Activated CD8-positive, alpha-beta memory T cell treated with anti-CD3 and anti-CD28 coated beads, Interleukin-2, amount 10 ng/mL, durations not matched to agents 7 days and 5 days (primary cell): ENCODE measurements at regions of chr11 and their contacts with region 1.

Region 1: DNA sequence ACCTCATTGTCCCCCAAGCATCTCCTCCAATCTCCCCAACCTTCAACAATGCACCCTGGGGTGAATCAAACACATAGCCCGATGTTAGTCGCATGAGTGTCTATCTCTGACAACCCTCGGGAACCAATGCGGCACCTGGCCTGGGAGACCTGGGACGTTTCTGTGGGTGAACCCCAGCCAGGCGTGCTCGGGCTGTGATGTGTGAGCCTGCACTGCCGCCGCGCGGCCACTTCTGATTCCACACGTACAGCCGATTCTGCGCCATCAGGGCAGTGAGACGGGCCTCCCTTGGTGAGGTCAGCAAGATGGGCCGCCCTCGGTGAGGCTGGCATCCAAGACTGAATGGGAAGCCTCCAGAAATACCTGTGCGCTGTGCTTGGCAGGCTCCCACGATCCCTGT is 5.2 kb upstream of the H19 start:
- DNase-seq: no peak
- ATAC-seq: peak; percentile 74
- H3K4me3 Mint-ChIP-seq: no peak overlapping the region
- H3K27ac Mint-ChIP-seq: no peak overlapping the region
- H3K4me1 Mint-ChIP-seq: no peaks in the 10 kb centered on the region
- H3K27me3 Mint-ChIP-seq: no peaks in the 10 kb centered on the region

Region 2: DNA sequence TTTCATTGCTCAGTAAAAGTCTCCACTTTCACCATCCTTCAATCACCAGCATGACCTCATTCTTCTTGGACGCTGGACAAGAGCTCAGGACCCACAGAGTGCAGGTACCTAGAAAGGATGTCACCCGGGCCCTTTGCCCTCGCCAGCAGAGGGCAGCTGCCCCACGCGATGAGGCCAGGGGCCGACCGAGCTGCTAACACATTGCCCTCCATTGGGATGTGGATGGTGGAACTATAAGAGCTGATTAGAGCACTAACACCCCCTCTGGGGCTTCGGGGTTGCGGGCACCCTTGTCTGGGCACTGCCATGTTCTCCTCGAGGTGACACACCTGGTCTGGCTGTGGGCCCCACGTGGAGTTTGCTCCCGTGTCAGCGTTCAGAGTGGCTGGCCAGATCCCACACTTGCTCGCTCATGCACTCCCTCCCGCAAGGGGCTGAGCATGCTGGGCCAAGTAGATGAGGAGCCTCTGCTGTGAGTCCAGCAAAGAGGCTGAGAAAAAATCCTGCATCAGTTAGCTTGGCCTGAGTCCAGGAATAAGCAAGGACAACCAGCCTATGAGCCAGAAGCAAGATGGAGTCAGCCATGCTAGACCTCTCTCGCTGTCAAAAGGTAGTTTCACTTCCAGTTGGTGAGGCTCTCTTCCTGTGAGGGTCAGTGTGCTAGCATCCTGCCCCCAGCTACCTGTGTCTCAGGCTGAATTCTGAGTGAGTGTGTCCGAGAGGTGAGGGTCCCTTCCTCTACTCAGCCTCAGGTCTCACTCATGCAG is 296.0 kb before region 1 on chr11:
- CTCF ChIA-PET with region 1: interaction called, 13 read pairs
- DNase-seq: peak; percentile 48
- ATAC-seq: peak; percentile 39
- H3K4me3 Mint-ChIP-seq: no peak overlapping the region
- H3K27ac Mint-ChIP-seq: no peak overlapping the region
- H3K4me1 Mint-ChIP-seq: peaks cover 29% of the 10 kb centered on the region
- H3K27me3 Mint-ChIP-seq: peaks cover 40% of the 10 kb centered on the region

Region 3: GRCh38 chr11:1837171-1838076 is 165.4 kb before region 1 on chr11:
- CTCF ChIA-PET with region 1: interaction called, 125 read pairs
- DNase-seq: peak; percentile 92
- ATAC-seq: peak; percentile 91
- H3K4me3 Mint-ChIP-seq: no peak overlapping the region
- H3K27ac Mint-ChIP-seq: no peak overlapping the region
- H3K4me1 Mint-ChIP-seq: peaks cover 8% of the 10 kb centered on the region
- H3K27me3 Mint-ChIP-seq: peaks cover 7% of the 10 kb centered on the region

Region 4: GRCh38 chr11:1852877-1853276 is 149.9 kb before region 1 on chr11 and contains the start of gene LSP1:
- CTCF ChIA-PET with region 1: interaction called, 50 read pairs
- DNase-seq: peak; percentile 95
- ATAC-seq: peak; percentile 59
- H3K4me3 Mint-ChIP-seq: peak within 1 kb of the TSS; percentile 99
- H3K27ac Mint-ChIP-seq: peak within 1 kb of the TSS; percentile 99
- H3K4me1 Mint-ChIP-seq: peaks cover 55% of the 10 kb centered on the region
- H3K27me3 Mint-ChIP-seq: no peaks in the 10 kb centered on the region
- total RNA-seq, gene LSP1: 574 to 702 TPM

Region 5: DNA sequence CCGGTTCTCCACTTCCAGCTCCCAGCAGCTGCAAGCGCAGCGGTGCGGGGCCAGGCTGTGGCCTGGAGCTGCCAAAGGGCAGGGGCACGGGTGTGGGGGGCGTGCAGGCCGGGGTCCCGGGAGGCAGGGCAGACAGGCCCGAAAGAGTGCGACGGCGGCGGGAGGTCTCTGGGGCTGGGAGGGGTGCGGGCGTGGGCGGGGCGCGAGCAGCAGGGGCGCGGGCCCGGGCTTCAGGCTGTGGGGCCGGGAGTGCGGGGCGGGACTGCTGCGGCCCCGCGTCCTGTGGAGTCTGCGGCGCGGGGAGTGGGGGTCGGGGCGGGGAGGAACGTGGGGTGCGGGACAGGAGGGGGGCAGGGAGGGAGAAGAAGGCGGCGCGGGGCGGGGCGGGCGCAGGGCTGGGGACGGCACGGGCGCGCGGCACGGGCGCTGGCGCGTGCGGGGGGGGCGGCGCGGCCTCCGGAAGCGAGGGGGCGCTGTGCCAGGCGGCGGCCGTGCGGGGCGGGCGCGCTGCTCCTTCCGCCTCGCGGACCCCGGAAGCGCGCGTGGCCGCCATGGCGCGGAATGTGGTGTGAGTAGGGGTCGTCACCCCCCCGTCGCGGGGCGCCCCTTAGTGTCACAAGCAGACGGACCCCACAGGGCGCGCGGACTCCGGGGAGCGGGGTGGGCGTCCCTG is 55.9 kb before region 1 on chr11 and contains the start of gene MRPL23:
- CTCF ChIA-PET with region 1: interaction called, 10 read pairs
- DNase-seq: no peak
- ATAC-seq: peak; percentile 81
- H3K4me3 Mint-ChIP-seq: no peak within 1 kb of the TSS
- H3K27ac Mint-ChIP-seq: no peak within 1 kb of the TSS
- H3K4me1 Mint-ChIP-seq: no peaks in the 10 kb centered on the region
- H3K27me3 Mint-ChIP-seq: no peaks in the 10 kb centered on the region
- total RNA-seq, gene MRPL23: 109 to 114 TPM

Region 6: GRCh38 chr11:1953489-1954266 is 49.1 kb before region 1 on chr11:
- CTCF ChIA-PET with region 1: interaction called, 10 read pairs
- DNase-seq: peak; percentile 48
- ATAC-seq: peak; percentile 79
- H3K4me3 Mint-ChIP-seq: no peak overlapping the region
- H3K27ac Mint-ChIP-seq: no peak overlapping the region
- H3K4me1 Mint-ChIP-seq: no peaks in the 10 kb centered on the region
- H3K27me3 Mint-ChIP-seq: no peaks in the 10 kb centered on the region